ENCODE measurements at regions of chr9 and their contacts with region 1.

Region 1: DNA sequence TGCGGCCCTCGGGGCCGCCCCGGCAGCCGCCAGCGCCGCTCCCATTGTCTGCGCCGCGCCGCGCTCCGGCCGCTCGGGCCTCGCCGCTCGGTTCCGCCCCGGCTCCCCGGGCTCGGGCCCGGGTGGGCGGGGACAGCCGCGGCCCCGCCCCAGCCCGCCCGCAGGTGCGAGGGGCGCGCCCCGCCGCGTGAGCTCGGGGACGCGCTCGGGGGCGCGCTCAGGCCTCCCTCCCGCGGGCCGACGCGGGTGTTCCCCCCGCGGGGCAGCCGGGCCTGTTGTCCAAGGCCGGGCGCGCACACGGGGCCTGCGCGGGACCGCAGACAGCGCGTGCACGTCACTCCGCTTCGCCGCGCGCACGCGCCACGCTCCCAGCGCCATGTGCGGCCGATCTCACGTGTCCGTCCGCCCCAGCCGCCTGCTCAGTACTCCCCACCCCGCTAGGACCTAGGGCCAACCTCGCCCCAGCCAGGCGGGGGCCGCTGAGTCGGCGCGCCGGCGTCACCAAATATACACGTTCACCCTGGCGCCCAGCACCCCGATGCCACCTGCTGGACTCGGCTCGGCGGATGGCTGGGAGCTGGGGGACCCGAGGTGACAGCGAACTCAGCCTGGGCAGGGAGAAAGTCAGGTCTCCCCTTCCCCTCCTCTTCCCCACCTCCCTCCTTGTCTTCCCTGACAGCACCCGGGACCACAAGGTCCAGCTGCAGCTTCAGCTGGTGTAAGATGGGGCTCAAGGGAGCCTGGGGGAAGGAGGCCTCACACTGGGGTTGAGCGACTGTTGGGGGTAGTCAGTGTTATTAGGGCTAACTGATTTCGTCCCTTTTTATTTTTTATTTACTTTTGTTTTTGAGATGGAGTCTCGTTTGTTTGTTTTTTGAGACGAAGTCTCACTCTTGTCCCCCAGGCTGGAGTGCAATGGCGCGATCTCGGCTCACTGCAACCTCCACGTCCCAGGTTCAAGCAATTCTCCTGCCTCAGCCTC is 14.3 kb downstream of the GBGT1 start:
- DNase-seq: peak; percentile 70 to 98 (median 84)

Region 2: DNA sequence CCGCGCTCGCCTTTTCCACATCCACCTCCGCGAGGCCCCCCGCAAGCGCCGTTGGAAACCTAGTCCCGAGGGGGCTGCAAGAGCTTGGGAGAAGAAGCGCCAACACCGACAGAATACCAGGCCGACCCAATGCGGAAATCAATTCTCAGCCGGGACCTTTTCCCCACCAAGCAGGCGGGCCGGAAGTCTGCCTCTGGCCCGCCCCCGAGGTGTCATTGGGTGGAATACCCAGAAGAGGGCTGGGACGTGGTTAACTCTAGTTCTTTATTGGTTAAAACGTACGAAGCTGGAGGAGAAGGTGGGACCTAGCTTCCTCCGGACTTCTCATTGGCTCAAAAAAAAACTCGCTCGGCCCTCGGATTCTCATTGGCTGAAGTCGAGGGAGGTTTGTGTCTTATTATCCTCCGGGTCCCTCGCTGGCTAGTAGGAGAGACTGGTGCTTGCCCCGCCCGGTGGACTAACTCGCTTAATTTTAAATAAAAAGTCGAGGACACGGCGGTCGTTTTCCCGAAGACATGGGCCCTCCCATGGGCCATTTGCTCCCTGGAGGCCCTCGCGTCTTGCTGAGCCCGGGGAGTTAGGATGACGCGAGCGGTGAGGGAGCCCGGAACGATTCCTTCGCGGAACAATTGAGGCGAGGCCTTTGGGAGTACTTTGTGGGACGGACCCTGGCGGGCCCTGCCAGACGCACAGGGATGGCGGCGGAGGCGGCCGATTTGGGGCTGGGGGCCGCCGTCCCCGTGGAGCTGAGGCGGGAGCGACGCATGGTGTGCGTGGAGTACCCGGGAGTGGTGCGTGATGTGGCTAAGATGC is 118.9 kb before region 1 on chr9 and contains the start of gene GTF3C5:
- intact Hi-C with region 1: loop called (anchors 5 kb)
- DNase-seq: peak; percentile 89 to 99 (median 93)

Region 3: GRCh38 chr9:133048569-133048968 is 100.8 kb before region 1 on chr9:
- intact Hi-C with region 1: loop called (anchors 2 kb)
- DNase-seq: peak in 8 of 10 donors; percentile 35 to 92 (median 64)

Region 4: GRCh38 chr9:133121198-133121939 is 28.0 kb before region 1 on chr9 and contains the start of gene RALGDS:
- intact Hi-C with region 1: loop called (anchors 2 kb)
- DNase-seq: peak; percentile 83 to 99 (median 90)

Measured in posterior cingulate gyrus (tissue), 11 donors.